ENCODE measurements at regions of chr2 and their contacts with region 1.

Region 1: DNA sequence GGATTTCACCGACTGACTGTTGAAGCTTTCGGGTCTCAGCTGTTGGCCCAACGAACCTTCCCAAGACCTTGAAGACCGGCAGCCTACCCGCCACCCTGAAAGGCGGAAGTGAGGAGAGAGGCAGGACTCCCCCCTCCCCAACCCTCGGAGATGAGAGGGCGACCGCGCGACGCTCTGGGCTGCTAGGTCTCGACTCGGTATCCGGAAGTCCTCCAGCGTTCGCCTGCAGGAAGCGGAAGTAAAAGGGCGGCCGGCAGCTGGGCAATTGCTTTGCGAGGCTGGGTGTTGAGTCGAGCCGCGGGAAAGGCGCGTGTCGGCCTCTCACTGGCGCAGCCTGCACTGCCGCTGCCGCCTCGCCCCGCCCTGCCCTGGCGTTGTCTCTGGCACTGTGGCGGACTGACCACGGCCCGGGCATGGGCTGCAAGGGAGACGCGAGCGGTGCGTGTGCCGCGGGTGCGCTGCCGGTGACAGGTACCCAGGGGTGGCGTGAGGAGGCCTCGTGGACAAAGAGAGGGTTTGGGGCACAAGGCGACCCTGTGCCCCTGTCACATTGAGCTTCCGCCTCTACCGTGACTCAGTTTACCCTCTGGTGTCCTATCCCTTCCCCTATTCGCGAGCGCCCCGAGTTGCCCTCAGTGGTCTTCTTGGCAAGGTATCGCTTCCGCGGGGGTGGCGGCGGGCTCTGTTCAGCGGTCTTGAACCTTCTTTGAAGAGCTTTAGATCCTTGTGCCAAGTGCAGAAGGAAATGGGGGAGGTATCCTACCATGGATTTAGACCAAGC is at the start of gene UGGT1:
- DNase-seq: peak; percentile 98
- ATAC-seq: peak; percentile 97
- H3K4me3 ChIP-seq: peak within 1 kb of the TSS; percentile 73 to 93 (median 79)
- H3K4me3 Mint-ChIP-seq: peak within 1 kb of the TSS; percentile 92
- H3K27ac ChIP-seq: peak within 1 kb of the TSS; percentile 57 to 78
- H3K27ac Mint-ChIP-seq: peak within 1 kb of the TSS; percentile 92
- H3K4me1 ChIP-seq: peaks cover 12 to 18% of the 10 kb centered on the region in 2 donors
- H3K4me1 Mint-ChIP-seq: peaks cover 42% of the 10 kb centered on the region
- H3K27me3 ChIP-seq: no peaks in the 10 kb centered on the region
- H3K27me3 Mint-ChIP-seq: no peaks in the 10 kb centered on the region
- CTCF ChIP-seq: no peak
- total RNA-seq, gene UGGT1: 42.1 and 44.1 TPM in 2 replicates

Region 2: GRCh38 chr2:127293748-127294562 is 797.2 kb before region 1 on chr2 and contains the start of gene ERCC3:
- CTCF ChIA-PET with region 1: no interaction called
- POLR2A ChIA-PET with region 1: no interaction called
- intact Hi-C with region 1: loop called (anchors 5 kb)
- DNase-seq: peak; percentile 86
- ATAC-seq: peak; percentile 96
- H3K4me3 ChIP-seq: peak within 1 kb of the TSS; percentile 82 to 97 (median 88)
- H3K4me3 Mint-ChIP-seq: peak within 1 kb of the TSS; percentile 100
- H3K27ac ChIP-seq: peak within 1 kb of the TSS; percentile 46 to 84
- H3K27ac Mint-ChIP-seq: peak within 1 kb of the TSS; percentile 95
- H3K4me1 ChIP-seq: peaks cover 5 to 22% of the 10 kb centered on the region in 2 donors
- H3K4me1 Mint-ChIP-seq: peaks cover 31% of the 10 kb centered on the region
- H3K27me3 ChIP-seq: no peaks in the 10 kb centered on the region
- H3K27me3 Mint-ChIP-seq: no peaks in the 10 kb centered on the region
- CTCF ChIP-seq: no peak
- total RNA-seq, gene ERCC3: 74.8 and 79.3 TPM in 2 replicates

Region 3: GRCh38 chr2:127387655-127388422 is 703.3 kb before region 1 on chr2 and contains the start of gene MAP3K2:
- CTCF ChIA-PET with region 1: no interaction called
- POLR2A ChIA-PET with region 1: no interaction called
- intact Hi-C with region 1: loop called (anchors 5 kb)
- DNase-seq: peak; percentile 97
- ATAC-seq: peak; percentile 74
- H3K4me3 ChIP-seq: peak within 1 kb of the TSS; percentile 73 to 95 (median 80)
- H3K4me3 Mint-ChIP-seq: peak within 1 kb of the TSS; percentile 92
- H3K27ac ChIP-seq: peak within 1 kb of the TSS; percentile 97 to 99
- H3K27ac Mint-ChIP-seq: peak within 1 kb of the TSS; percentile 99
- H3K4me1 ChIP-seq: peaks cover 50 to 57% of the 10 kb centered on the region in 2 donors
- H3K4me1 Mint-ChIP-seq: peaks cover 80% of the 10 kb centered on the region
- H3K27me3 ChIP-seq: no peaks in the 10 kb centered on the region
- H3K27me3 Mint-ChIP-seq: no peaks in the 10 kb centered on the region
- CTCF ChIP-seq: no peak
- total RNA-seq, gene MAP3K2: 112 and 118 TPM in 2 replicates

Region 4: DNA sequence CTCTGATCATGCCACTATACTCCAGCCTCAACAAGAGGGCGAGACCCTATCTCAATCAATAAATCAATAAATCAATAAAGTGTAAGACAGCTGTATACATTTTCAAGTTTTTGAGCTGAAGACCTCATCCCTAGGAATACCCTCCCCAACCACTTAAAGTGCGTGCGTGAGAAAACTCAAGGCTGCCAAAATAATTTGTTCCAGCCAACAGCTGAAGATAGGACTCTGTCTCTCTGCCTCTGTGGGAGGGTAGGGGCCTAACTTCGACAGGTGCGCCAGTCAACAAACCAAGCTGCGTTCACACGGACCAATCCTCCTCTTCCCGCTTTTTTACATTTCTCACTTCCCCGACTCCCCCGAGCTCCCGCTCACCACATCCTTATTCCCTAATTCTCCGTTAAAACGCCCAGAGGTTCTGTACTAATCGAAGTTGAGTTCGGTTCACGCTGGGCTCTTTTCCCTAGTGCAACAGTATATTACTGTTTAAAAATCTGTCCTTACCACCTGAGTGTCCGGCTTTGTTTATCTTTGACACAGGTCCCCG is 233.8 kb before region 1 on chr2:
- CTCF ChIA-PET with region 1: no interaction called
- POLR2A ChIA-PET with region 1: interaction called, 3 read pairs
- intact Hi-C with region 1: loop called (anchors 1 kb)
- DNase-seq: no peak
- ATAC-seq: no peak
- H3K4me3 ChIP-seq: peak overlapping the region; percentile 68 to 87 (median 80)
- H3K4me3 Mint-ChIP-seq: peak overlapping the region; percentile 88
- H3K27ac ChIP-seq: peak overlapping the region; percentile 41 to 85
- H3K27ac Mint-ChIP-seq: peak overlapping the region; percentile 57
- H3K4me1 ChIP-seq: peaks cover 16 to 36% of the 10 kb centered on the region in 2 donors
- H3K4me1 Mint-ChIP-seq: peaks cover 46% of the 10 kb centered on the region
- H3K27me3 ChIP-seq: no peaks in the 10 kb centered on the region
- H3K27me3 Mint-ChIP-seq: no peaks in the 10 kb centered on the region
- CTCF ChIP-seq: no peak

Region 5: GRCh38 chr2:127884436-127885345 is 206.4 kb before region 1 on chr2:
- CTCF ChIA-PET with region 1: no interaction called
- POLR2A ChIA-PET with region 1: interaction called, 3 read pairs
- intact Hi-C with region 1: loop called (anchors 2 kb)
- DNase-seq: peak; percentile 29
- ATAC-seq: no peak
- H3K4me3 ChIP-seq: peak overlapping the region in 4 of 5 experiments; percentile 21 to 55 (median 45)
- H3K4me3 Mint-ChIP-seq: peak overlapping the region; percentile 91
- H3K27ac ChIP-seq: peak overlapping the region in 1 of 2 donors; percentile 45
- H3K27ac Mint-ChIP-seq: peak overlapping the region; percentile 84
- H3K4me1 ChIP-seq: peaks cover 15 to 21% of the 10 kb centered on the region in 2 donors
- H3K4me1 Mint-ChIP-seq: peaks cover 33% of the 10 kb centered on the region
- H3K27me3 ChIP-seq: no peaks in the 10 kb centered on the region
- H3K27me3 Mint-ChIP-seq: no peaks in the 10 kb centered on the region
- CTCF ChIP-seq: no peak

Region 6: GRCh38 chr2:128103407-128103806 is 12.3 kb after region 1 on chr2:
- CTCF ChIA-PET with region 1: no interaction called
- POLR2A ChIA-PET with region 1: no interaction called
- intact Hi-C with region 1: no loop called
- DNase-seq: no peak
- ATAC-seq: no peak
- H3K4me3 ChIP-seq: no peak overlapping the region
- H3K4me3 Mint-ChIP-seq: no peak overlapping the region
- H3K27ac ChIP-seq: no peak overlapping the region
- H3K27ac Mint-ChIP-seq: no peak overlapping the region
- H3K4me1 ChIP-seq: no peaks in the 10 kb centered on the region
- H3K4me1 Mint-ChIP-seq: peaks cover 10% of the 10 kb centered on the region
- H3K27me3 ChIP-seq: no peaks in the 10 kb centered on the region
- H3K27me3 Mint-ChIP-seq: no peaks in the 10 kb centered on the region
- CTCF ChIP-seq: no peak

Region 7: GRCh38 chr2:128321784-128322714 is 230.9 kb after region 1 on chr2:
- CTCF ChIA-PET with region 1: no interaction called
- POLR2A ChIA-PET with region 1: no interaction called
- intact Hi-C with region 1: loop called (anchors 5 kb)
- DNase-seq: peak; percentile 91
- ATAC-seq: peak; percentile 52
- H3K4me3 ChIP-seq: peak overlapping the region; percentile 31 to 67 (median 52)
- H3K4me3 Mint-ChIP-seq: peak overlapping the region; percentile 78
- H3K27ac ChIP-seq: no peak overlapping the region
- H3K27ac Mint-ChIP-seq: peak overlapping the region; percentile 71
- H3K4me1 ChIP-seq: peaks cover 15 to 21% of the 10 kb centered on the region in 2 donors
- H3K4me1 Mint-ChIP-seq: peaks cover 20% of the 10 kb centered on the region
- H3K27me3 ChIP-seq: peaks cover 0 to 10% (median 0%) of the 10 kb centered on the region in 4 experiments
- H3K27me3 Mint-ChIP-seq: no peaks in the 10 kb centered on the region
- CTCF ChIP-seq: peak; percentile 96

Region 8: GRCh38 chr2:128820452-128820851 is 729.3 kb after region 1 on chr2:
- CTCF ChIA-PET with region 1: no interaction called
- POLR2A ChIA-PET with region 1: no interaction called
- intact Hi-C with region 1: no loop called
- DNase-seq: no peak
- ATAC-seq: no peak
- H3K4me3 ChIP-seq: no peak overlapping the region
- H3K4me3 Mint-ChIP-seq: no peak overlapping the region
- H3K27ac ChIP-seq: no peak overlapping the region
- H3K27ac Mint-ChIP-seq: no peak overlapping the region
- H3K4me1 ChIP-seq: no peaks in the 10 kb centered on the region
- H3K4me1 Mint-ChIP-seq: no peaks in the 10 kb centered on the region
- H3K27me3 ChIP-seq: peaks cover 0 to 5% (median 1%) of the 10 kb centered on the region in 4 experiments
- H3K27me3 Mint-ChIP-seq: peaks cover 23% of the 10 kb centered on the region
- CTCF ChIP-seq: no peak